ENCODE measurements at regions of chr16 and their contacts with region 1.

Region 1: DNA sequence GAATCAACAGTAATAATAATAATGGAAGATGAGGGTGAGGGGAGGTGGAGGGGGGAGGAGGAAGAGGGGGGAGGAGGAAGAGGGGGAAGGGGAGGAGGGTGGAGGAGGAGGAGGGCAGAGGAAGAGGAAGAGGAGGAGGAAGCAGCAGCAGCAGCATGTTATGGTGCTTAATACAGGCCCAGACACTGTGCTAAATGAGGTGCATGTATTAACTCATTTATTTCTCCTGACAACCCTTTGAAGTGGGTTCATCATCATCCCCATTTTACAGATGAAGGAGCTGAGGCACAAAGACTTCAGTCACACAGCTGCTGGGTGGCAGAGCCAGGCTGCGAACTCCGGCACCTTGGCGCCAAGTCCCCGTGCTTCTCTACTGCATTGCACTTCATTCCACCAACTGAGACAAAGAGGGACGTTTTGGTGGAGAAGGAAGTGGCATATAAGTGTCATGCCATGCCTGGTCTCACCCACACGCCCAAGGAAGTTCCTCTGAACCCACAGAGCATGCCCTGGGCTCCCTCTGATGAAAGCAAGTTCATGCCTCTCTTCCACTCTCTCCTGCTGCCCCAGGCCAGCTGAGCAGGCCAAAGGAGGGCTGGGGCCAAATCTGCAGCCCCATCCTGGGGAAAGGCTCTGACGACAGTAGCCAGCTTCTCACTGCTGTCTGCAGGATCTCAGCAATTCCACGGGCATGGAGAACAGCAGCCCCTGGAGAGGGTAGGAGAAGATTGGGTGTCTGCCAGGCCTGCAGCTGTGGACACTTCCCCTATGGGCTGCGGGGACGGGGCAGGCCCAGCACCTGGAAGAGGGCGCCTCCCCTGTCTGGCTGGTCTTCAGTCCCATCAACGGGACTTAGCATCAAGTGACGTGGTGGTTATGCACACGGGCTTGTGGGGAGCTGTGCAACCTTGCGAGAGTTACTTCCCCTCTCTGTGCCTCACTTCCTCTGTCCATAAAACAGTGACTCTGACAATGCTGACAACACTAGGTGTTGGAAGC is 21.8 kb downstream of the XYLT1 start:
- DNase-seq: peak; percentile 56
- ATAC-seq: peak; percentile 91
- H3K4me3 Mint-ChIP-seq: peak overlapping the region; percentile 66
- H3K27ac Mint-ChIP-seq: peak overlapping the region; percentile 94
- H3K4me1 Mint-ChIP-seq: peaks cover 43% of the 10 kb centered on the region
- H3K27me3 Mint-ChIP-seq: no peaks in the 10 kb centered on the region

Region 2: DNA sequence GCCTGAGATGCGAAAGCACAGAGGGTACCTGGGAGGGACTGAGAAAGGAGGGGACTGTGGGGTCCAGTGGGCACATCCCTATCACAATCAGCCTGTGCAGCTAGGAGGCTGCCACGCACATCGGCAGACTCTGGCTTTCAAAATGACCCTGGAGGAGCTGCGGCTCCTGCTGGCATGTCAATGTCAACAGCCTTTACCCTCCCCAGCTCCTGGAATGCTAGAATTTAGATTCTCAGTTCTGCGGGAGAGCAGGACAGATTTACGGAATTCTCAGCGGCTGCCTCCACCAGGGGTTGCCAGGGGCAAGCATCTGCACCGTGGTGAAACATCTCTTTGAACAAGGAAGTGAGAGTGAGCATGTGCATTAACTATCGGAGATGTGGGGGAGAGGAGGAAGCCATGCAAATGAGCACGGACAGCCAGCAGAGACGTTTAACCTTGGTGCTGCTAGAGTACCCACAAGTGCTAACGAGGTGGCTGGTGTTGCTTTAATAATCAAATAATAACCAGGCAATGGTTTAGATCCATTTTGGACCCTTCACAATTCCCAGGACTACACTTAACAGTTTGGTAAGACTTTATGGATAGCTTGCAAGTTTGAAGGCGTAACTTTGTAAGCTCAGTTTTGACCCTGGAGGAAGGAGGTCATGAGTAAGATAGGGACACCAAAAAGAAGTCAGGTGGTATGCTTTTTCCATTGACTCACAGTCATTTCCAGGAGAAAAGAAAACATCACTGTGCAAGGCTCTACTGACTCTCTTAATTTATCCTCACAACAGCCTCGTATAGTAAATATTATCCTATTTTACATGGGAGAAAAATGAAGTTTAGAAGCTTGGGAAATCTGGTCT is 32.3 kb before region 1 on chr16:
- POLR2A ChIA-PET with region 1: interaction called, 11 read pairs
- DNase-seq: peak; percentile 58
- ATAC-seq: peak; percentile 93
- H3K4me3 Mint-ChIP-seq: peak overlapping the region; percentile 81
- H3K27ac Mint-ChIP-seq: peak overlapping the region; percentile 94
- H3K4me1 Mint-ChIP-seq: peaks cover 45% of the 10 kb centered on the region
- H3K27me3 Mint-ChIP-seq: no peaks in the 10 kb centered on the region

Measured in activated naive CD8-positive, alpha-beta T cell treated with anti-CD3 and anti-CD28 coated beads, Interleukin-2, amount 10 ng/mL, durations not matched to agents 7 days and 5 days (primary cell).